Breast epithelium (tissue), 4 donors: ENCODE measurements at regions of chr13 and their contacts with region 1.

Region 1: DNA sequence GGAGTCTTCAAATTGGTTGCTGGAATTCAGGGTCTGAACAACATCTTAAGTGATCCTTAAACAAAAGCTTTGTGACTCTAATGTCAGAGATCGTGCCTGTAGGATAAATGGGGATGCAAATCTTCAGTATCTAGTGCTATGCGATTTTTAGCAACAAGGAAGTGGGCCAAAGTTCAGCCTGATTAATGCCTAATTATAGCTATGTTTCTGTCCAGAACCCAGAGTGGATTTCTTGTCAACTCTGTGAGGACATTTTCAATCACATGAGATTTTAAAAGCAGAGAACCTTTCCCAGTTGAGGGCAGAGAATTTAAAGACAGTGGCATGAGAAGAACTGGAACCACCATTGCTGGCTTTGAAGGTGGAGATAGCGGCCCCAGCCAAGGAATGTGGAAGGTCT is 84.3 kb upstream of the PCDH9 start:
- DNase-seq: no peak
- H3K4me3 ChIP-seq: no peak overlapping the region
- H3K27ac ChIP-seq: no peak overlapping the region
- H3K4me1 ChIP-seq: no peaks in the 10 kb centered on the region
- H3K27me3 ChIP-seq: no peaks in the 10 kb centered on the region
- CTCF ChIP-seq: no peak
- POLR2A ChIP-seq: no peak

Region 2: GRCh38 chr13:65582160-65582559 is 1732.2 kb before region 1 on chr13:
- intact Hi-C with region 1: loop called (anchors 5 kb)
- DNase-seq: no peak
- H3K4me3 ChIP-seq: no peak overlapping the region
- H3K27ac ChIP-seq: no peak overlapping the region
- H3K4me1 ChIP-seq: no peaks in the 10 kb centered on the region
- H3K27me3 ChIP-seq: no peaks in the 10 kb centered on the region
- CTCF ChIP-seq: no peak
- POLR2A ChIP-seq: no peak